GM13977 (cell line): ENCODE measurements at regions of chr17 and their contacts with region 1.

Region 1: GRCh38 chr17:75904749-75905521 is at the start of gene MRPL38:
- DNase-seq: peak; percentile 100
- CTCF ChIP-seq: peak; percentile 93

Region 2: DNA sequence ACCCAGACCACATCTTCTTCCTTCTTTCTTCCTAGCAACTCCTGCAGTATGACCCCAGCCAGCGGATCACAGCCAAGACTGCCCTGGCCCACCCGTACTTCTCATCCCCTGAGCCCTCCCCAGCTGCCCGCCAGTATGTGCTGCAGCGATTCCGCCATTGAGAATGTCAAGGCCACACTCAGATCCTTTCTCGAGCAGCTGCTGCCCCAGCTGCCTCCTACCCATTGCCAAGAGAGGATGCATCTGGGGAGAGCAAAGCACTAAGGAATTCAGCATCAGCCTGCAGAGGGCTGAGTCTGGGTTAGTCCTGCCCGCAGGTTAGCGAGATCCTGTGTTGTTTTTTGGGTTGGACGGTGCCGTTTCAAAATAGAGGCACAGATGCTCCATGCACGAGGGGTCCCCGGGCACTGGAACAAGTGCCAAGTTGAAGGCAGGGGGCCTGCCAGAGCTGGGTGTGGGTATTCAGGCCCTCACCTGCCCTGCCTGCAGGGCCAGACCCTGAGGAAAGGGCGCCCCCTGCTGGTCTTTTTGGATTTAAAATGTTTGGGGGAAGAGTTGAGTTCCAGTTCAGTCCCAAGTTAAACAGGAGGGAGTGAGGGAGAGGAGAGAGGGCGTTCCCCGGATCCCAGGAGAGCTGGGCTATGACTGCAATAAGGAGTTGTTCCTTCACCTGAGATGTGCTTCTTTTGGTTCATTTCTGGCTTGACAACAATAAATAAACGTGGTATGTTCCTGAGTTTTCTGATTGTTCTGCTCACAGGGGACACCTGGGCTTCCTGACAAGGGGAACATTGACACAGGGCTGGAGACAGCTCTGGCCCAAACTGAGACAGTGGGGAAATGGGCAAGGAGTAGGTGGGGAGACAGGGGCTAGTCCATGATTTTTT is 100.6 kb after region 1 on chr17:
- in situ Hi-C with region 1: loop called (anchors 10 kb)
- DNase-seq: peak; percentile 90
- CTCF ChIP-seq: peak; percentile 77

Region 3: GRCh38 chr17:76314392-76315227 is 409.7 kb after region 1 on chr17:
- in situ Hi-C with region 1: loop called (anchors 25 kb)
- DNase-seq: no peak
- CTCF ChIP-seq: no peak